ENCODE measurements at regions of chr11 and their contacts with region 1.

Region 1: GRCh38 chr11:16356057-16356760 is at the start of gene SOX6:
- DNase-seq: no peak
- ATAC-seq: peak in 6 of 8 donors; percentile 27 to 77 (median 70)
- H3K4me3 ChIP-seq: peak within 1 kb of the TSS in 4 of 10 donors; percentile 6 to 21 (median 8)
- H3K27ac ChIP-seq: peak within 1 kb of the TSS in 8 of 10 donors; percentile 13 to 79 (median 58)
- H3K4me1 ChIP-seq: peaks cover 0 to 57% (median 35%) of the 10 kb centered on the region in 9 donors
- H3K27me3 ChIP-seq: no peaks in the 10 kb centered on the region
- CTCF ChIP-seq: no peak
- total RNA-seq, gene SOX6: 12.6 to 43.0 (median 25.8) TPM

Region 2: DNA sequence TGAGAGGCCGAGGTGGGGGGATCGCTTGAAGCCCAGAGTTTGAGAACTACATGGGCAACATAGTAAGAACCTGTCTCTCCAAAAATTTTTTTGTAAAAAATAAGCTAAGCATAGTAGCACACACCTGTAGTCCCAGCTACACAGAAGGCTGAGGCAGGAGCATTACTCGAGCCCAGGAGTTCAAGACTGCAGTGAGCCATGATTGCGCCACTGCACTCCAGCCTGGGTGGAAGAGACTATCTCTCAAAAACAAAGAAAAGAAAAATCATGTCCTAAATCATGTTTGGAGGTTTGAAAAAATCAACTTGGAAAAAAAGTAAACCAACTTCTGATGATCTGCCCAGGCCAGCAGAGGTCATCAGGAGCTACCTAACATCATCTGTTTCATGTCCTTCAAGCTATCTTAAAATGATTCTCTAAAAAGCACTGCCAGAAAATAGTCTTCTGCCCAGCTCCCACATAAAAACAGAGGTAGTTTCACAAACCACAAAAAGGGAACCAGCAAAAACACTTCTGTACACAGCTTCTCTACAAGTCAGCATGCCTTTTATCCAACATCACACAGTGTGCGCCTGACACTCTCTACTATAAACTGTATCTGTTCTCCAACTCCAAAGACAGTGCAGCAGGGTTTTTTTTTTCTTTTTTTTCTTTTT is 164.9 kb before region 1 on chr11:
- intact Hi-C with region 1: loop called in 1 of 10 experiments (anchors 5 kb)
- DNase-seq: no peak
- ATAC-seq: peak in 4 of 8 donors; percentile 20 to 39 (median 26)
- H3K4me3 ChIP-seq: no peak overlapping the region
- H3K27ac ChIP-seq: peak overlapping the region in 1 of 10 donors; percentile 4
- H3K4me1 ChIP-seq: peaks cover 0 to 41% (median 34%) of the 10 kb centered on the region in 9 donors
- H3K27me3 ChIP-seq: no peaks in the 10 kb centered on the region
- CTCF ChIP-seq: peak in 4 of 9 donors; percentile 36 to 56 (median 45)

Region 3: GRCh38 chr11:16587670-16588069 is 231.5 kb after region 1 on chr11:
- intact Hi-C with region 1: no loop called
- DNase-seq: peak in 1 of 2 donors; percentile 68
- ATAC-seq: peak; percentile 83 to 98 (median 94)
- H3K4me3 ChIP-seq: no peak overlapping the region
- H3K27ac ChIP-seq: no peak overlapping the region
- H3K4me1 ChIP-seq: peaks cover 0 to 42% (median 24%) of the 10 kb centered on the region in 9 donors
- H3K27me3 ChIP-seq: no peaks in the 10 kb centered on the region
- CTCF ChIP-seq: no peak

Measured in heart right ventricle (tissue), 16 donors.